PC-3 (cell line): ENCODE measurements at regions of chr11 and their contacts with region 1.

Region 1: DNA sequence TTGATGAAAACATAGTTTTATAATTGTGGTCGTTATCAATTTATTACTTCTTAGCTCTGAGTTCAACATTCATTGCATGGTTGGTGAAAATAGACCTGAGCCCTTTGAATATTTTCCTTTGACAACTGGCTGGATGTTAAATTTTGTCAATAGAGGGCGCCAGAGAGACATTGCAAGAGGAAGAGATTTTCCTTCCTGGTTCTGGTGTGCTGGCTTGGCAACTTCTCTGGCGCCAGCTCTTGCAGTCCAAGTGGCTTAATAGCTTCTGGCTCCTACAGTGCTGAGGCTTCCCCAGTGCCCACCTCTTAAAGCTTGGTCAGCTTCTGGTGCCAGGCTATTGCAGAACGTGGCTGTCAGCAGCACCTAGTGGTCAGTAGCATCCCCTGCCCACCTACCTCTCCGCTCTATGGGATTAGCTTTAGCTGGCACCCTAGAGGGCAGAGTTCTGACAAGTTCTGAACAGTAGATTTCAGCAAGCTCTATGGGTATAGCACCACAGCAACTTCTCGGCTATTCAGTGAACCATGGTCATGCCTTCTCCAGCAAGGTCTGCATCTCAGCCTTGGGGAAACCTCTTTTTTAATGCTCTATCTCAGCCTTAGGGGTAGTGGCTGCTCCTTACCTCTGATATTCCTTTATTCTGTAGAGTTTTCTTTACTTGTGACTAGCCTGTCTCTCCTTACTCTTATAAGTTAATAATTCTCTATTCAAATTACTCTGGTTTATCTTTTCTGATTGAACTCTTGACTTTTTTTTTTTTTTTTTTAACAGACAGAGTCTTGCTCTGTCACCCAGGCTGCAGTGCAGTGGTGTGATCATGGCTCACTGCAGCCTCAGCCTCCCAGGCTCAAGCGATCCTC is 59.4 kb downstream of the ACER3 start:
- DNase-seq: peak; percentile 96
- ATAC-seq: peak; percentile 77
- H3K4me3 ChIP-seq: no peak overlapping the region
- H3K27ac ChIP-seq: no peak overlapping the region
- H3K4me1 ChIP-seq: peaks cover 20% of the 10 kb centered on the region
- H3K27me3 ChIP-seq: no peaks in the 10 kb centered on the region
- CTCF ChIP-seq: peak; percentile 99

Region 2: DNA sequence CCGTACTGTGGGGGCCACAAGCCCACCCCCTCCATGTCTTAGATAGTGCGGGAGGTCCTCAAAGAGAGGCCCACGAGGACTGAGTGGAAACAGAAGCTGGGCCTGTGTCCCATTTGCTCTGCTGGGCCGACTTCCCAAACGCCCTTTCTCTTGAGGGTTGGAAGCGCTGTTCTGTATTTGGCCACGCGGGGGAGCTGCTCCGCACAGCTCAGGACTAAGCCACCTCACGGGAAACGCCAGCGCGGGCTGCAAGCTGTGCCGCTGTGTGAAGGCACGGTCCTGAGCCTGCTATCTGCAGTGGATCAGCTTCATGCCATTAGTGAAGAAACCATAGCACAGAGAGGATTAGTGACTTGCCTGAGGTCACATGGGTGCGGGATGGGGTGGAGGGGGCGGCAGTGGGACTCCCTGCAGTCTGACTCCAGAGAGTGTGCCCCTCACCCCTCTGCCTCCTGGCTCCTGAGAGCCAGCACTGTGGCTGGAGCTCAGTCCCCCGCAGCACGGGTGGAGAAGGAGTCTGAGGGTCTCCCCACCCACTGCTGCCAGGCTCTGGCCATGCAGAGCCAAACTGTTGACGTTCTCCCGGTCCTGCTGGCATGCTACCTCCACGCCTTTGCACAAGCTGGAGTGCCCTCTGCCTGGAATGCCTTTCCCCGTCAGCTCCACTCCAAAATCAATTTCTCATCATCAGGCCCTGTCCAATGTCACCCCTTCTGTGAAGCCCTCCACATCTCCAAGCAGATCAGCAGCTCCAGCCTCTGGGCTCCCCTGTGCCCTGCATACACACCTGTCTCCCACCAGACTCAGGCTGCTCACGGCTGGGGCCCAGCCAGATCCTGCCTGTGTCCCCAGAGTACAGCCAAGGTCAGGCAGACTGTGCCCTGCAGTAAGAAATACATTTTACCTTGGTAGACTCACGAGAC is 198.1 kb before region 1 on chr11:
- CTCF ChIA-PET with region 1: interaction called, 15 read pairs
- POLR2A ChIA-PET with region 1: no interaction called
- intact Hi-C with region 1: no loop called
- DNase-seq: peak; percentile 94
- ATAC-seq: peak; percentile 99
- H3K4me3 ChIP-seq: peak overlapping the region; percentile 50; the same call in 1 of the 2 replicates
- H3K27ac ChIP-seq: no peak overlapping the region
- H3K4me1 ChIP-seq: peaks cover 6% of the 10 kb centered on the region; the same call in 1 of the 2 replicates
- H3K27me3 ChIP-seq: peaks cover 22% of the 10 kb centered on the region; the same call in 1 of the 2 replicates
- CTCF ChIP-seq: peak; percentile 96

Region 3: GRCh38 chr11:76807206-76807875 is 112.8 kb before region 1 on chr11:
- CTCF ChIA-PET with region 1: interaction called, 38 read pairs
- POLR2A ChIA-PET with region 1: no interaction called
- intact Hi-C with region 1: loop called (anchors 1 kb)
- DNase-seq: peak; percentile 88
- ATAC-seq: peak; percentile 91
- H3K4me3 ChIP-seq: 0 out of 2 replicates have a peak overlapping the region, but pooled peaks have one; percentile 25
- H3K27ac ChIP-seq: no peak overlapping the region
- H3K4me1 ChIP-seq: no peaks in the 10 kb centered on the region
- H3K27me3 ChIP-seq: no peaks in the 10 kb centered on the region
- CTCF ChIP-seq: peak; percentile 92

Region 4: DNA sequence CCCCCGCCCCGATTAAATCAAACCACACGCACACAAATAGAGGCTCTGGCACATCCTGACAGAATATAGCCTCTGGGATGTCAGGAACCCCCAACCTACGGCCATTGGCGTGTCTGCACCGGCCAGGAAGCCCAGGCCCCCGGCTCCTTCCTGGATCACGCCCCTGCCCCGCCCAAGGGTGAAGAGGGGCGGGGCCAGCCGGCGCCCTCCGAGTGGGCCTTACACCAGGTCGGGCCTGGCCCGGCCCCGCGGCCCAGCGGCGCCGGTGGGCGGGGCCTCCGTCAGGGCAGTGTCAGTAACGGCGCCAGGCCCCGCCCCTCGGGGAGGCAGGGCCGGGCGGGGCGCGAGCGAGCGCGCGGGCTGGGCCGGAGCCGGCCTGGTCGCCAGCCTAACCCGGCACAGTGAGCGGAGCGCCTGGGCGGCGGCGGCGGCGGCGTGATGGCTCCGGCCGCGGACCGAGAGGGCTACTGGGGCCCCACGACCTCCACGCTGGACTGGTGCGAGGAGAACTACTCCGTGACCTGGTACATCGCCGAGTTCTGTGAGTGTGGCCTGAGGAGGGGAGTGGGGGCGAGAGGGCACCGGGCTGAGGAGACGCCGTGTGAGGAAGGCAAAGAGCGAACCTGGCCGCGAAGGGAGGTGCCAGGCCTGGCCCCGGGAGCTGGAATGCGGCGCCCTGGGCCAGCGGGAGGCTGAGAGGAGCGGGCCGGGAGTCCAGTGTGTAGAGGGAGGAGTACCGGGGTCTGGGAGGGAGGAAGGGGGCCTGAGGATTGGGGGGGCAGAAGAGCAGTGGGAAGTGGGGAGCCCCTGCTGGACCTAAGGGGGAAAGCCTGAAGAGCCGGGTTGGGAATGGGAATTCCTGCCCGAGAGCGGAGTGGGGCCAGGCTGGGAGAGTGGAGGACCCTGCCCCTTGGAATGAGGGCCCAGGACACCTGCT is 59.3 kb before region 1 on chr11 and contains the start of gene ACER3:
- CTCF ChIA-PET with region 1: no interaction called
- POLR2A ChIA-PET with region 1: no interaction called
- intact Hi-C with region 1: loop called (anchors 2 kb)
- DNase-seq: peak; percentile 98
- ATAC-seq: peak; percentile 95
- H3K4me3 ChIP-seq: peak within 1 kb of the TSS; percentile 93
- H3K27ac ChIP-seq: peak within 1 kb of the TSS; percentile 22; the same call in 1 of the 2 replicates
- H3K4me1 ChIP-seq: peaks cover 16% of the 10 kb centered on the region
- H3K27me3 ChIP-seq: no peaks in the 10 kb centered on the region
- CTCF ChIP-seq: peak; percentile 24; the same call in 1 of the 2 replicates
- total RNA-seq, gene ACER3: 17.3 and 18.5 TPM in 2 replicates

Region 5: DNA sequence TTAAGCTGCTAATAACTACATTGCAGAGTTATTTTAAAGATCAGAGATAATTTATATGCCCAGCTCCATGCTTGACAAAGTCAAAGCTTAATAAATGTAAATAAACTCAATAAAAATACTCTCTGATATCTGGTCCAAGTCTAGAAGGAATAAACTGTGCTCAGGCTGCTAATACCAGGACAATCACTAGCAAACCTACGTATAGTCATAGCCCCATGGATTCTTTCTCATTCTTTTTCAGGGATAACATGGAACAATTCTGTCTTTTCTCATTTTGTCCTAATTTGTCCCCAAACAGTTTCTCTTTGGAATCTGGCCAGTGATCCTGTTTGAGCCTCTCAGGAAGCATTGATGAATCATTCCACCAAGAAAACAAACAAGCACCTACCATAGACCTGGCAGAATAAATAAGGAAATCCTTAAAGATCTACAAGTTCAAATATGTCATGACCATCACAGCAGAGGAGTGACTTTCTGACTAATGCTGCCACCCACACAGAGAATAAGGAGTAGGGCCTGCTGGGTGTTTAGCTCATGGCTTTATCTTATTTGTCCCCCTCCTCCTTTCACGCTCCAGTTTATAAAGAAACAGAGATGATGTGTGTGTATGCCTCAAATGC is 100.0 kb after region 1 on chr11:
- CTCF ChIA-PET with region 1: interaction called, 21 read pairs
- POLR2A ChIA-PET with region 1: interaction called, 5 read pairs
- intact Hi-C with region 1: loop called (anchors 5 kb)
- DNase-seq: peak; percentile 92
- ATAC-seq: peak; percentile 99
- H3K4me3 ChIP-seq: peak overlapping the region; percentile 13; the same call in 1 of the 2 replicates
- H3K27ac ChIP-seq: peak overlapping the region; percentile 83
- H3K4me1 ChIP-seq: peaks cover 34% of the 10 kb centered on the region
- H3K27me3 ChIP-seq: no peaks in the 10 kb centered on the region
- CTCF ChIP-seq: no peak

Region 6: DNA sequence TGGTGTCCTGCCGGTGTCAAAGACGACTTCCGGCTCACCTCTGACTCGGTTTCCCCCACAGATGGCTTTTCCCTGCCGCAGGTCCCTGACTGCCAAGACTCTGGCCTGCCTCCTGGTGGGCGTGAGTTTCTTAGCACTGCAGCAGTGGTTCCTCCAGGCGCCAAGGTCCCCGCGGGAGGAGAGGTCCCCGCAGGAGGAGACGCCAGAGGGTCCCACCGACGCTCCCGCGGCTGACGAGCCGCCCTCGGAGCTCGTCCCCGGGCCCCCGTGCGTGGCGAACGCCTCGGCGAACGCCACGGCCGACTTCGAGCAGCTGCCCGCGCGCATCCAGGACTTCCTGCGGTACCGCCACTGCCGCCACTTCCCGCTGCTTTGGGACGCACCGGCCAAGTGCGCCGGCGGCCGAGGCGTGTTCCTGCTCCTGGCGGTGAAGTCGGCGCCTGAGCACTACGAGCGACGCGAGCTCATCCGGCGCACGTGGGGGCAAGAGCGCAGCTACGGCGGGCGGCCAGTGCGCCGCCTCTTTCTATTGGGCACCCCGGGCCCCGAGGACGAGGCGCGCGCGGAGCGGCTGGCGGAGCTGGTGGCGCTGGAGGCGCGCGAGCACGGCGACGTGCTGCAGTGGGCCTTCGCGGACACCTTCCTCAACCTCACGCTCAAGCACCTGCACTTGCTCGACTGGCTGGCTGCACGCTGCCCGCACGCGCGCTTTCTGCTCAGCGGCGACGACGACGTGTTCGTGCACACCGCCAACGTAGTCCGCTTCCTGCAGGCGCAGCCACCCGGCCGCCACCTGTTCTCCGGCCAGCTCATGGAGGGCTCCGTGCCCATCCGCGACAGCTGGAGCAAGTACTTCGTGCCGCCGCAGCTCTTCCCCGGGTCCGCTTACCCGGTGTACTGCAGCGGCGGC is 119.6 kb after region 1 on chr11:
- CTCF ChIA-PET with region 1: interaction called, 24 read pairs
- POLR2A ChIA-PET with region 1: no interaction called
- intact Hi-C with region 1: loop called (anchors 2 kb)
- DNase-seq: no peak
- ATAC-seq: no peak
- H3K4me3 ChIP-seq: no peak overlapping the region
- H3K27ac ChIP-seq: no peak overlapping the region
- H3K4me1 ChIP-seq: peaks cover 31% of the 10 kb centered on the region
- H3K27me3 ChIP-seq: no peaks in the 10 kb centered on the region
- CTCF ChIP-seq: peak; percentile 60

Region 7: DNA sequence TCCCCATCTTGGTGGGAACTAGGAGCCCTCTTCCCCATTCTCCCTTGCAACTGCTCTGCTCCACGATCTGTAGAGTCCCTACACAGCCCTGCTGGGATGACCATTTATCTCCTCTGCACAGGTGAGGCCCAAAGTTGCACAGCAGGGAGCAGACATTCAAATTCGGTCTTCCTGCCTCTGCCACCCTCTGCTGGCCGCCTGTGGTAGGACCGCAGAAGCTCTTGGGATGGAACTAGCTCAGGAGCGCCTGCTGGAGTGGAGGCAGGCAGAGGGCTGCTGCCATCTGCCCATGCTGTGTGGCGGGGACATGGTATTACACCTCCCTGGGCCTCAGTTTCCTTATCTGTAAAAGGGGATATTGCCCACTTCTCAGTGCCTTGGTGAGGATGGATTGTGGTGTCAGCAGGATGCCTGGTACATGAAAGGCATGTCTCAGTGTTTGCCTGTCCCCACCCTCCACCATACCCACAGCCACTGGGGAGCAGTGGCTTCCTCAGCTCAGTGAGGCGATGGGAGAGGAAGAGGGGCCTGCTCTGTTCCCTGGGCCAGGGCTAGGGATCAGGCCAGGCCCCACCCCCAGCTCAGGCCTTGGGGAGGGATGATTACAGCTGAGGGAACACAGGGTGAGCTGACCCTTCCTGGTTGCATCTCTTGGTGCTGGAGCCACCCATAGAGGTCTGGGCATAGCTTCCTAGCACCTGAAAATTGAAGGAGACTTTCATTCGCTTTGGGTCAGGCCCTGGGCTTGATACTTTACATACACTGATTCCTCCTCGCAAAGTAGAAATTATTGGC is 171.2 kb after region 1 on chr11:
- CTCF ChIA-PET with region 1: interaction called, 9 read pairs
- POLR2A ChIA-PET with region 1: no interaction called
- intact Hi-C with region 1: loop called (anchors 1 kb)
- DNase-seq: peak; percentile 93
- ATAC-seq: peak; percentile 93
- H3K4me3 ChIP-seq: no peak overlapping the region
- H3K27ac ChIP-seq: no peak overlapping the region
- H3K4me1 ChIP-seq: peaks cover 23% of the 10 kb centered on the region
- H3K27me3 ChIP-seq: no peaks in the 10 kb centered on the region
- CTCF ChIP-seq: peak; percentile 98